K562 (cell line): ENCODE measurements at regions of chr6 and their contacts with region 1.

Region 1: DNA sequence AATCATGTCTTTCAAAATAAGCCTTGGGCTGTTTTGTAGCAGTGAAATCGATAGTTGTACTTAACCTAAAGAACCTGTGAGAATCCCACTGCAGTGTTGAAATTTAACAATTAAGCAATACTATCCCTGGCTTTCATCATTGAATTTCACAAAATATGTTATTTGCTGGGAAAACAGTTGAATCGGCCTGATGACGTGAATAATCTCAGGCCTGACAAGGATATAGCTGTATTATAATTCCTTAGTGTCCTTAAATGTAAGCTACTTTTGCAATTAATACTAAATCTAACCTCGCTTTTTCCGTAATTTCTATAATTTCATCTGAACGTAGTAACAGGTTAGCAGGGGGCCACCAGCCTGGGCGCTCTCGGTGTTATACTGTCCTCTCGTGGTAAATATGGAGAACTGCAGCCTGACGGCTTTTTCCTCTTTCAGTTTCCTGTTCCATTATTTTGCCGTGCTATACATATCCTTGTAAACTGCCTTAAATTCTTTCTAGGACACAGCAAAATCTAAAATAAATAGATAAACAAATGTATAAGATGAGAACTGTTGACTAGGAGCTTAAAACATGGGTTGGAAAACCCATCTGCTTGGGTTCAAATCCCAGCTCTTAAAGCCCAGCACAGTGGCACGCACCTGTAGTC is 24.0 kb downstream of the MTFR2 start:
- DNase-seq: peak; percentile 75 to 83 (median 80)
- ATAC-seq: peak; percentile 85
- H3K4me3 ChIP-seq: no peak overlapping the region
- H3K27ac ChIP-seq: no peak overlapping the region
- H3K4me1 ChIP-seq: peaks cover 5 to 20% of the 10 kb centered on the region in 2 experiments; a peak in 4 of 5 replicates
- H3K27me3 ChIP-seq: no peaks in the 10 kb centered on the region
- CTCF ChIP-seq: peak; percentile 96 to 99 (median 99)
- EP300 ChIP-seq: no peak
- POLR2A ChIP-seq: no peak
- RAD21 ChIP-seq: peak; percentile 99

Region 2: DNA sequence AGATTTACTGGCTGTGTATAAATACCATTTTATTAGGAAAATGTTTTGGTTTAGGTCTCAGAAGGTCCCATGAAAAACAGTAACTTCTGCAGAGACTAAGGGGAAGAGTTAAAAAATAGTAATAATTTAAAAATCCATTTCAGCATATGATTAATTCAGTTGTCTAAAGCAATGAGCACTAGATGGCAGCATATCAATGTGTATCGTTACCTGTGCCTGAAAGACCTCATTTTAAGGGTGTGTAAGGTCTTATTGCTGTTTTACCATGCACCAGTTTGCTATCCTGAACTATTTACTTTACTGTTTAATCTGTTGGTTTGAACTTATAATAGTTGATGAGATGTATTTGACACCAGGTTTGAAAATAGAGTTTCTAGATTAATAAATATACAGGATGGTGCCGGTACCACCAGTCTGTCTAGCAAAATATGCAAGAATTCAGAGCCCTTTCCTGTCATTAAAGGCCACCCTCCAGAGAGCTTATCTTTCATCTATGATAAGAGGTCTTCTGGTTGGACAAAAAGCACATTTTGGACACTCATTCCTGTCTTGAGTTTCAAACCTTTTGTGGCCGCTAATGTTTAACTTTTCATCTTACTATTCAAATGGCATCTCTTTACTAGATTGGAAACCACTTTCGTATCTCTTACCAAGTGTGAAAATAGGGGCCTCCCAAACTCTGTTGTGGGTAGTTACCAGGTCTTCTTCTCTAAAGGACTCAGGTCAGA is 719.7 kb before region 1 on chr6:
- CTCF ChIA-PET with region 1: interaction called, 12 read pairs
- POLR2A ChIA-PET with region 1: no interaction called
- in situ Hi-C with region 1: no loop called
- intact Hi-C with region 1: loop called (anchors 1 kb)
- DNase-seq: peak; percentile 29 to 67 (median 48)
- ATAC-seq: peak; percentile 93
- H3K4me3 ChIP-seq: no peak overlapping the region
- H3K27ac ChIP-seq: no peak overlapping the region
- H3K4me1 ChIP-seq: peaks cover 0 to 6% of the 10 kb centered on the region in 2 experiments; a peak in 3 of 5 replicates
- H3K27me3 ChIP-seq: no peaks in the 10 kb centered on the region
- CTCF ChIP-seq: peak; percentile 49 to 90 (median 73); a peak in 5 of 6 replicates
- EP300 ChIP-seq: no peak
- POLR2A ChIP-seq: no peak
- RAD21 ChIP-seq: peak; percentile 93 to 94

Region 3: GRCh38 chr6:135675862-135676261 is 550.3 kb before region 1 on chr6:
- CTCF ChIA-PET with region 1: interaction called, 3 read pairs
- POLR2A ChIA-PET with region 1: no interaction called
- in situ Hi-C with region 1: no loop called
- intact Hi-C with region 1: loop called (anchors 1 kb)
- DNase-seq: peak; percentile 43 to 67 (median 50)
- ATAC-seq: peak; percentile 87
- H3K4me3 ChIP-seq: no peak overlapping the region
- H3K27ac ChIP-seq: no peak overlapping the region
- H3K4me1 ChIP-seq: no peaks in the 10 kb centered on the region
- H3K27me3 ChIP-seq: peaks cover 0 to 4% of the 10 kb centered on the region in 2 experiments; a peak in 1 of 5 replicates
- CTCF ChIP-seq: peak in 2 of 3 experiments; percentile 54 to 56; a peak in 5 of 6 replicates
- EP300 ChIP-seq: no peak
- POLR2A ChIP-seq: no peak
- RAD21 ChIP-seq: peak; percentile 57 to 80

Region 4: GRCh38 chr6:135842618-135843392 is 383.3 kb before region 1 on chr6:
- CTCF ChIA-PET with region 1: no interaction called
- POLR2A ChIA-PET with region 1: no interaction called
- in situ Hi-C with region 1: no loop called
- intact Hi-C with region 1: no loop called
- DNase-seq: no peak
- ATAC-seq: no peak
- H3K4me3 ChIP-seq: no peak overlapping the region
- H3K27ac ChIP-seq: no peak overlapping the region
- H3K4me1 ChIP-seq: no peaks in the 10 kb centered on the region
- H3K27me3 ChIP-seq: peaks cover 9 to 14% of the 10 kb centered on the region in 2 experiments; a peak in 3 of 5 replicates
- CTCF ChIP-seq: no peak
- EP300 ChIP-seq: no peak
- POLR2A ChIP-seq: no peak
- RAD21 ChIP-seq: no peak

Region 5: GRCh38 chr6:136031982-136032381 is 194.2 kb before region 1 on chr6:
- CTCF ChIA-PET with region 1: no interaction called
- POLR2A ChIA-PET with region 1: no interaction called
- in situ Hi-C with region 1: no loop called
- intact Hi-C with region 1: loop called (anchors 5 kb)
- DNase-seq: peak in 3 of 4 experiments; percentile 17 to 30 (median 19)
- ATAC-seq: peak; percentile 81
- H3K4me3 ChIP-seq: no peak overlapping the region
- H3K27ac ChIP-seq: no peak overlapping the region
- H3K4me1 ChIP-seq: no peaks in the 10 kb centered on the region
- H3K27me3 ChIP-seq: peaks cover 0 to 12% of the 10 kb centered on the region in 2 experiments; a peak in 2 of 5 replicates
- CTCF ChIP-seq: peak; percentile 37 to 51 (median 44); a peak in 5 of 6 replicates
- EP300 ChIP-seq: no peak
- POLR2A ChIP-seq: no peak
- RAD21 ChIP-seq: peak in 1 of 2 experiments; percentile 46; a peak in 3 of 4 replicates

Region 6: DNA sequence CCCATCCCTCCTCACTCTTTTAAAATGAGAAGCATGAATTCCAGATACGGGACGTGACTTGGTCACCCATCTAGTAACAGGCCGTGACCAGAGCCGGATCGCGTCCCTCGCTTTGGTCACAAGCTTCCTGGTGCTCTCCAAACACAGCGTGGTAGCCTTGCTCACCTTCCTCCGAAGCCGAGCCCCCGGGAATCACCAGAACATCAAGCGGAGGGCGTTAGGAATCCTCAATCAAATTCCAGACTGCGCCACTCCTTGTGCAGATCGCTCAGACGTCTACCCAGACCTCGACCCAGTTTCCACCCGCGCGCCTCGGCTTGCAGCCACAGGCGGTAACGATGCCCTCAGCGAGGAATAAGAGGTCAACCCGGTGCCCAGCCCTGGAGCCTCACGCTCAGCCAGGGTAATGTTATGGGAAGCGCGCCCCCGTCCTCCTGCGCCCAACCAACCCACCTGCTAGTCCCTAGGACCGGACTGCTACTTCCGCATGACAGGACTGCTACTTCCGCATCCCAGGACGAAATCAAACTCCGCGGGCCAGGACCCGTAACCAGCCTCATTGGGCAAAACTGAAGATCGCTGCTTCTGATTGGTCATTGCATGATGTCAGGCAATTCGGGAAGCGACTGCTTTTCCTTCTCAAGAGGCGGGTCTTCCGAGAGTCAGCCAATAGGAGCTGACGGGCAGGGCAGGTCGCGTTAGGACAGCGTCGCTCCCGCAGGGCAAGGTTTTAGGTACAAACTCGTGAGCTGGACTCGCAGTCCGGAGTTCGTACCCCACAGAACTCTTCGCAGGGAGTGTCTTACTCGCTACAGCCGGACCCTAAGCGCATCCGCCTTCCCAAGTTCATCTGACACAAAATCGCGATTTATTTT is 23.9 kb after region 1 on chr6 and contains the start of gene MTFR2:
- CTCF ChIA-PET with region 1: no interaction called
- POLR2A ChIA-PET with region 1: interaction called, 11 read pairs
- in situ Hi-C with region 1: no loop called
- intact Hi-C with region 1: no loop called
- DNase-seq: peak; percentile 100
- ATAC-seq: peak; percentile 93
- H3K4me3 ChIP-seq: peak within 1 kb of the TSS; percentile 88
- H3K27ac ChIP-seq: peak within 1 kb of the TSS; percentile 82
- H3K4me1 ChIP-seq: peaks cover 0 to 20% of the 10 kb centered on the region in 2 experiments; a peak in 2 of 5 replicates
- H3K27me3 ChIP-seq: no peaks in the 10 kb centered on the region
- CTCF ChIP-seq: no peak
- EP300 ChIP-seq: peak; percentile 45
- POLR2A ChIP-seq: peak; percentile 93
- RAD21 ChIP-seq: 0 out of 4 replicates have a peak, but pooled peaks have one; percentile 9 to 12
- polyA plus RNA-seq, gene MTFR2: 45.9 to 49.7 TPM

Region 7: DNA sequence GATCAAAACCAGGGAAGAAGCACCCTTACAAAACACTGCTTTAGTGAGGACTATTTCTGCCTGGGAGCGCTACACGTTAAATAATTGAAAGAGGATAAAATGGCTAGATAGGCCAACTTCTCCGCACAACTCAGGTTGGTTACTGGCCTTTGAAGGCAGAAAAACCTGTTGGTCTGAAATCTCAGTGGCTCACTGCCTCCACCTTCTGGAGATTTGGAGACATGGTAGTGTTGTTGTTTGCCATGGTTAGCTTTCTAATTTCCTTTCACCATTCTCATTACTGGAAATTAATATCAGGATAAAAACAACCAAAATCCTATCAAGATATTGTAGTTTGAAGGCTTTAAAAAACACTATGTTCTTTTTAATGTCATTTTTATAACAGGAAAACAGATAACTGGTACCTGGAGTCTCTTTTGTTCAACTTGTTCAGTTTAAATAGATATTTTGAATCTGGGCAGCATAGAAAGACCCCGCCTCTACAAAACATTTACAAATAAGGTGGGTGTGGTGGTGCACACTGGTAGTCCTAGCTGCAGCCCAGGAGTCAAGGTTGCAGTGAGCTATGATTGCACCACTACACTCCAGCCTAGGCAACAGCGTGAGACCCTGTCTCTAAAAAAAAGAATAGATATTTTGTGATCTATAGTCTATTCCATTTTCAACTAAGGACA is 91.0 kb after region 1 on chr6:
- CTCF ChIA-PET with region 1: no interaction called
- POLR2A ChIA-PET with region 1: no interaction called
- in situ Hi-C with region 1: no loop called
- intact Hi-C with region 1: loop called (anchors 1 kb)
- DNase-seq: peak; percentile 64 to 82 (median 67)
- ATAC-seq: peak; percentile 91
- H3K4me3 ChIP-seq: no peak overlapping the region
- H3K27ac ChIP-seq: no peak overlapping the region
- H3K4me1 ChIP-seq: no peaks in the 10 kb centered on the region
- H3K27me3 ChIP-seq: peaks cover 4 to 6% of the 10 kb centered on the region in 2 experiments; a peak in 4 of 5 replicates
- CTCF ChIP-seq: peak; percentile 75 to 95 (median 84)
- EP300 ChIP-seq: no peak
- POLR2A ChIP-seq: no peak
- RAD21 ChIP-seq: peak; percentile 83 to 95